CD4-positive, alpha-beta T cell (primary cell): ENCODE measurements at regions of chr12 and their contacts with region 1.

Region 1: DNA sequence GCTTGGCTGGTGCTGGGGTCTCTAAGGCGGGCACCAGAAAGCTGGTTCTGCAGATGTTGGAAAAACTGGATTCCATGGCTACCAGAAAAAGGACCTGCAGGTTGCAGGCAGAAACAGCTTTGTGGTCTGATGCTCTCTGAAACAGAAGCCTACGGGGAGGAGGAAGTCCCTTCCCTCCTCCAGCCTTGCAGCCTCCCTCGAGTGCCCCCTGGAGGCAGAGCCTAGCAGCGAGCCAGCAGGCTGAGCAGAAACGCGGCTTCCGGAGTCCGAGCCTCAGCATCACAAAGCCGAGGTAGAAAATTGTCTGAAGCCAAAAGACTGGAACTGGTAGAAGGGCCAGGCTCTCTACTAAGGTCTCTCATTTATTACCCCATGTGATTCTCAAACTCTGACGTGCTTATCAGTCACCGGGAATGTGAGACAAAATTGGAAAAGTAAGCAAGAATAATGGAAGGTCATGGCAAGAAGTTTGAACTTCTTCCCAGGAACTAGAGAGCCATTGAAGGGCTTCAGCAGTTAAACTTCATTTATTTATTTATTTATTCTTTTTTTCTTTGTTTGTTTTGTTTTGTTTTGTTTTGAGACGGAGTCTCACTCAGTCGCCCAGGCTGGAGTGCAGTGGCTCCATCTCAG is 82.2 kb upstream of the CPSF6 start:
- DNase-seq: peak; percentile 79 to 93 (median 87)
- ATAC-seq: peak; percentile 83
- H3K4me3 ChIP-seq: peak overlapping the region; percentile 17
- H3K4me3 Mint-ChIP-seq: peak overlapping the region; percentile 35
- H3K27ac ChIP-seq: no peak overlapping the region
- H3K27ac Mint-ChIP-seq: peak overlapping the region; percentile 57
- H3K4me1 ChIP-seq: peaks cover 16% of the 10 kb centered on the region
- H3K4me1 Mint-ChIP-seq: peaks cover 31% of the 10 kb centered on the region
- H3K27me3 ChIP-seq: no peaks in the 10 kb centered on the region
- H3K27me3 Mint-ChIP-seq: no peaks in the 10 kb centered on the region
- CTCF ChIP-seq: peak; percentile 87

Region 2: DNA sequence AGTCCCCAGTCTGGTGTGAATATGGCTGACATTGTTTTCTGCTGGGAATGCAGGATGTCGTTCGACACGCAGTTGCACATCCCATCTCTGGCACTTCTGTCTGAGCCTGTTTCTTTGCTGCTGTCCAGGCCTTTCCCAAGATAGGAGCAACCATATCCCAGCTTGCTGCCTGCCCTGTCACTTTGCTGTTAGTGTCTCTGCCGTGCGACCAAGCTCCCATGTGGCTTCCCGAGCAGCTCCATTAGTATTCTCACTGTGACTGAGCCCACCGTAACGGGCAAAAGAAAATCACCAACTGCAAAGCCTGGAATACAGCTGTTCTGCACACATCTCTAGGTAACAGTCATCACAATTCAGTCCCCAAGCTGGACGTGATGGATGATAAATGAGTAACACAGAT is 16.2 kb after region 1 on chr12:
- CTCF ChIA-PET with region 1: no interaction called
- POLR2A ChIA-PET with region 1: no interaction called
- intact Hi-C with region 1: no loop called
- DNase-seq: no peak
- ATAC-seq: no peak
- H3K4me3 ChIP-seq: no peak overlapping the region
- H3K4me3 Mint-ChIP-seq: no peak overlapping the region
- H3K27ac ChIP-seq: no peak overlapping the region
- H3K27ac Mint-ChIP-seq: no peak overlapping the region
- H3K4me1 ChIP-seq: no peaks in the 10 kb centered on the region
- H3K4me1 Mint-ChIP-seq: no peaks in the 10 kb centered on the region
- H3K27me3 ChIP-seq: no peaks in the 10 kb centered on the region
- H3K27me3 Mint-ChIP-seq: no peaks in the 10 kb centered on the region
- CTCF ChIP-seq: no peak

Region 3: GRCh38 chr12:69247268-69248018 is 90.3 kb after region 1 on chr12:
- CTCF ChIA-PET with region 1: interaction called, 45 read pairs
- POLR2A ChIA-PET with region 1: interaction called, 5 read pairs
- intact Hi-C with region 1: no loop called
- DNase-seq: no peak
- ATAC-seq: no peak
- H3K4me3 ChIP-seq: no peak overlapping the region
- H3K4me3 Mint-ChIP-seq: peak overlapping the region; percentile 42
- H3K27ac ChIP-seq: no peak overlapping the region
- H3K27ac Mint-ChIP-seq: peak overlapping the region; percentile 63
- H3K4me1 ChIP-seq: peaks cover 31% of the 10 kb centered on the region
- H3K4me1 Mint-ChIP-seq: peaks cover 88% of the 10 kb centered on the region
- H3K27me3 ChIP-seq: no peaks in the 10 kb centered on the region
- H3K27me3 Mint-ChIP-seq: no peaks in the 10 kb centered on the region
- CTCF ChIP-seq: no peak

Region 4: DNA sequence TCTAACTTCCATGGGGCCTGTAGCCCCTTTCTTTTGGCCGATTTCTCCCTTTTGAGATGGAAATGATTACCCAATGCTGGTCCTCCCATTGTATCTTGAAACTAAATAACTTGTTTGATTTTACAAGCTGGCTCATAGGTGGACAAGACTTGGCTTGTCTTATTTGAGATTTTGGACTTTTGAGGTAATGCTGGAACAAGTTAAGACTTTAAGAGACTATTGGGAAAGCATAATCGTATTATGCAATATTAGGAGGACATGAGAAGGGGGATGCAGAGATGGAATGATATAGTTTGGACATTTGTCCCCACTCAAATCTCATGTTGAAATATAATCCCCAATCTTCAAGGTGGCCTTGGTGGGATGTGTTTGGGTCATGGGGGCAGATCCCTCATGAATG is 141.8 kb after region 1 on chr12:
- CTCF ChIA-PET with region 1: no interaction called
- POLR2A ChIA-PET with region 1: no interaction called
- intact Hi-C with region 1: no loop called
- DNase-seq: no peak
- ATAC-seq: no peak
- H3K4me3 ChIP-seq: no peak overlapping the region
- H3K4me3 Mint-ChIP-seq: no peak overlapping the region
- H3K27ac ChIP-seq: no peak overlapping the region
- H3K27ac Mint-ChIP-seq: no peak overlapping the region
- H3K4me1 ChIP-seq: no peaks in the 10 kb centered on the region
- H3K4me1 Mint-ChIP-seq: no peaks in the 10 kb centered on the region
- H3K27me3 ChIP-seq: no peaks in the 10 kb centered on the region
- H3K27me3 Mint-ChIP-seq: peaks cover 21% of the 10 kb centered on the region
- CTCF ChIP-seq: no peak

Region 5: DNA sequence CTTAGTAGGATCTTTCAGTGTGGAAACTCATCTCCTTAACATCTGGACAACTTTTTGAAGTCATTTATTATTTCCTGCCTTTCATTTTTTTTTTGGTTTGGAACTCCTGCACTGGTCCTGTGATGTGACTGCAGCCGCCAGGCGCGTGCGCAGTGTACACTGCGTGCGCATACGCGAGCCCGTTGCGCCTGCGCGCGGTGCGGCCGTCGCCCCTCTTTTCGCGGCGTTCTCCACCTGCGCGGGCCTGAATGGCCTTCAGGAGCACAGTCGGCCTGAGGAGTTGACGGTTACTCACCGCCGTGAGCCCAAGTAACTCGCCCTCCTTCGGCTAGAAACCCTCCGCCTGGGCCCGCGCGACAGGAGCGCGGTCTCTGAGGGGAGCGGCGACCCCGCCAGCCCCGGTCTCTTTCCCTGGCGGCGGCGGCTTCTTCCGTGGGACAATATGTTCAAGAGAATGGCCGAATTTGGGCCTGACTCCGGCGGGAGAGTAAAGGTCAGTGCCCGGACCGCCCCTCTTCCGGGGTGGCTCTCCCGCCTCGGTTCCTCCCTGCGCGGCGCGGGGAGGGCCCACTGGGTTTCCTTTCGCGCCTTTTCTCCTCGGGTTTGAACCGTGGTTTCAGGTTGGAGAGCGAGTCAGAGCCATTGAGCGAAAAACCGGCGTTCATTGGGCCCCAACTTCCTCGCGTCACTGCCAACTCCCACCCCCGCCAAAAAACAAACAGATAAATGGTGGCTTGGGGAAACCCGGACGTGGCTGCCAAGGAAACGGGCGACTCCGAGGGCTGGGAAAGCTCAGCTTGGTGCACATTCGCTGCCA is 202.6 kb after region 1 on chr12 and contains the start of gene YEATS4:
- CTCF ChIA-PET with region 1: interaction called, 6 read pairs
- POLR2A ChIA-PET with region 1: no interaction called
- intact Hi-C with region 1: loop called (anchors 5 to 10 kb)
- DNase-seq: peak; percentile 70 to 95 (median 81)
- ATAC-seq: peak; percentile 81
- H3K4me3 ChIP-seq: peak within 1 kb of the TSS; percentile 100
- H3K4me3 Mint-ChIP-seq: peak within 1 kb of the TSS; percentile 97
- H3K27ac ChIP-seq: peak within 1 kb of the TSS; percentile 96 to 99
- H3K27ac Mint-ChIP-seq: peak within 1 kb of the TSS; percentile 95
- H3K4me1 ChIP-seq: peaks cover 21% of the 10 kb centered on the region
- H3K4me1 Mint-ChIP-seq: peaks cover 27% of the 10 kb centered on the region
- H3K27me3 ChIP-seq: no peaks in the 10 kb centered on the region
- H3K27me3 Mint-ChIP-seq: peaks cover under 1% of the 10 kb centered on the region
- CTCF ChIP-seq: no peak
- total RNA-seq, gene YEATS4: 26.2 TPM

Region 6: GRCh38 chr12:69570545-69571399 is 413.6 kb after region 1 on chr12:
- CTCF ChIA-PET with region 1: interaction called, 7 read pairs
- POLR2A ChIA-PET with region 1: no interaction called
- intact Hi-C with region 1: loop called (anchors 2 kb)
- DNase-seq: peak; percentile 15 to 87 (median 36)
- ATAC-seq: peak; percentile 88
- H3K4me3 ChIP-seq: no peak overlapping the region
- H3K4me3 Mint-ChIP-seq: no peak overlapping the region
- H3K27ac ChIP-seq: no peak overlapping the region
- H3K27ac Mint-ChIP-seq: no peak overlapping the region
- H3K4me1 ChIP-seq: no peaks in the 10 kb centered on the region
- H3K4me1 Mint-ChIP-seq: no peaks in the 10 kb centered on the region
- H3K27me3 ChIP-seq: no peaks in the 10 kb centered on the region
- H3K27me3 Mint-ChIP-seq: no peaks in the 10 kb centered on the region
- CTCF ChIP-seq: peak; percentile 92

Region 7: GRCh38 chr12:69639400-69640016 is 482.4 kb after region 1 on chr12:
- CTCF ChIA-PET with region 1: no interaction called
- POLR2A ChIA-PET with region 1: no interaction called
- intact Hi-C with region 1: loop called in 1 of 2 experiments (anchors 2 kb)
- DNase-seq: peak; percentile 22 to 78 (median 44)
- ATAC-seq: peak; percentile 79
- H3K4me3 ChIP-seq: no peak overlapping the region
- H3K4me3 Mint-ChIP-seq: no peak overlapping the region
- H3K27ac ChIP-seq: no peak overlapping the region
- H3K27ac Mint-ChIP-seq: no peak overlapping the region
- H3K4me1 ChIP-seq: no peaks in the 10 kb centered on the region
- H3K4me1 Mint-ChIP-seq: no peaks in the 10 kb centered on the region
- H3K27me3 ChIP-seq: no peaks in the 10 kb centered on the region
- H3K27me3 Mint-ChIP-seq: no peaks in the 10 kb centered on the region
- CTCF ChIP-seq: peak; percentile 72